IMR-90 (cell line): ENCODE measurements at regions of chr7 and their contacts with region 1.

Region 1: GRCh38 chr7:158829342-158830210 is at the start of gene ESYT2:
- DNase-seq: peak; percentile 96
- ATAC-seq: peak; percentile 87
- H3K4me3 ChIP-seq: peak within 1 kb of the TSS; percentile 86
- H3K27ac ChIP-seq: peak within 1 kb of the TSS; percentile 71
- H3K4me1 ChIP-seq: peaks cover 3% of the 10 kb centered on the region; the same call in 1 of the 2 replicates
- H3K27me3 ChIP-seq: no peaks in the 10 kb centered on the region
- CTCF ChIP-seq: peak; percentile 35
- POLR2A ChIP-seq: peak; percentile 94
- RAD21 ChIP-seq: peak; percentile 35
- total RNA-seq, gene ESYT2: 64.4 and 69.9 TPM in 2 replicates

Region 2: DNA sequence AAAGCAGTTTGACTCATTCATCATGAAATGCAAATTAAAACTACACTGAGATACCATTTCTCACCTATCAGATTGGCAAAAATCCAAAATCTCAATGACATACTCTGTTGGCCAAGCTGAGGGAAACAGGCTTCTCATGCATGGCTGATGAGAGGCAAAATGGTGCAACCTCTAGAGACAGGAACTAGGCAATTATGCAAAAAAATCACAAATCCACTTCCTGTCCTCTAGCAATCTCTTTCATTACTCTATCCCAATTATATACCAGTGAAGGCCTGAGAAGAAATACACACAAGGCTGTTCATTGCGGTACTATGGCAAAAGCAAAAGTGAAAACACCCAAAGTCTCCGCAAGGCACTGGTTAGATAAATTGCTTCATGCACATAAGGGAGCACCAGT is 216.1 kb before region 1 on chr7:
- CTCF ChIA-PET with region 1: no interaction called
- POLR2A ChIA-PET with region 1: no interaction called
- dilution Hi-C with region 1: no loop called
- in situ Hi-C with region 1: no loop called
- intact Hi-C with region 1: loop called (anchors 10 kb)
- DNase-seq: no peak
- ATAC-seq: no peak
- H3K4me3 ChIP-seq: no peak overlapping the region
- H3K27ac ChIP-seq: no peak overlapping the region
- H3K4me1 ChIP-seq: peaks cover 5% of the 10 kb centered on the region
- H3K27me3 ChIP-seq: no peaks in the 10 kb centered on the region
- CTCF ChIP-seq: no peak
- POLR2A ChIP-seq: no peak
- RAD21 ChIP-seq: no peak

Region 3: GRCh38 chr7:158704704-158705468 is 124.7 kb before region 1 on chr7 and contains the start of gene NCAPG2:
- CTCF ChIA-PET with region 1: no interaction called
- POLR2A ChIA-PET with region 1: no interaction called
- dilution Hi-C with region 1: no loop called
- in situ Hi-C with region 1: no loop called
- intact Hi-C with region 1: loop called (anchors 2 kb)
- DNase-seq: peak; percentile 98
- ATAC-seq: peak; percentile 99
- H3K4me3 ChIP-seq: peak within 1 kb of the TSS; percentile 87
- H3K27ac ChIP-seq: peak within 1 kb of the TSS; percentile 42
- H3K4me1 ChIP-seq: peaks cover 5% of the 10 kb centered on the region
- H3K27me3 ChIP-seq: no peaks in the 10 kb centered on the region
- CTCF ChIP-seq: no peak
- POLR2A ChIP-seq: no peak; the same call in 1 of the 2 replicates
- RAD21 ChIP-seq: peak; percentile 26; the same call in 1 of the 2 replicates
- total RNA-seq, gene NCAPG2: 25.8 and 31.7 TPM in 2 replicates

Region 4: DNA sequence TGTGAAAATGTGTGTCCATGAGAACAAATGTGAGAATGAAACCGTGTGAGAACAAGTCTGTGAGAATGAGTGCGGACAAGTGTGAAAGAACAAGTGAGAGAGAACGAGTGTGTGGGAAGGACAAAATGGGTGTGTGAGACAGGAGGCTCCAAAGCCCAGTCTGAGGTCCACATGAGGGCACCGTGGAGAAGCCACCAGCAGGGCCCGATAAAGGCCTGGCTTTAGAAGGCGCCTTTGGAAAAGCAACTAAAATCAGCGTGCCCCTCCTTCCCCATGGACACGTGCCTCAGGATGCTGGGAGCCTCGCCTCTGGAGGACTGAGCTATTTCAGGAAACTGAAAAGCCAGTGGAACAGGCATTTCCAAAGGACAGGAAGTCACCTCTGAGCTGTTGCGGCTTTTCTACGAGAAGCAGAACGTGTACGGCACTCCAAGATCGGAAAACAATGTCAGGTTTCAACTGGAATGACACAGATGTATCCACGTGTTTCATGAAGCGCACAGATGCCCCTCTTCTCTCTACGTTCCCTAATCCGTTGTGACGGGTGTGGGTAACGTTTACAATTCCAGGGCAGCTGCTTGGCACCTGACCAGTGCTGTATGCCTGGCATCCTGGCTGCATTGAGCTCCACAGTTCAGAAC is 46.7 kb before region 1 on chr7:
- CTCF ChIA-PET with region 1: interaction called, 3 read pairs
- POLR2A ChIA-PET with region 1: no interaction called
- dilution Hi-C with region 1: no loop called
- in situ Hi-C with region 1: no loop called
- intact Hi-C with region 1: loop called (anchors 2 kb)
- DNase-seq: peak; percentile 12
- ATAC-seq: no peak
- H3K4me3 ChIP-seq: no peak overlapping the region
- H3K27ac ChIP-seq: no peak overlapping the region
- H3K4me1 ChIP-seq: peaks cover 9% of the 10 kb centered on the region
- H3K27me3 ChIP-seq: no peaks in the 10 kb centered on the region
- CTCF ChIP-seq: peak; percentile 33; the same call in 1 of the 2 replicates
- POLR2A ChIP-seq: no peak
- RAD21 ChIP-seq: peak; percentile 57

Region 5: DNA sequence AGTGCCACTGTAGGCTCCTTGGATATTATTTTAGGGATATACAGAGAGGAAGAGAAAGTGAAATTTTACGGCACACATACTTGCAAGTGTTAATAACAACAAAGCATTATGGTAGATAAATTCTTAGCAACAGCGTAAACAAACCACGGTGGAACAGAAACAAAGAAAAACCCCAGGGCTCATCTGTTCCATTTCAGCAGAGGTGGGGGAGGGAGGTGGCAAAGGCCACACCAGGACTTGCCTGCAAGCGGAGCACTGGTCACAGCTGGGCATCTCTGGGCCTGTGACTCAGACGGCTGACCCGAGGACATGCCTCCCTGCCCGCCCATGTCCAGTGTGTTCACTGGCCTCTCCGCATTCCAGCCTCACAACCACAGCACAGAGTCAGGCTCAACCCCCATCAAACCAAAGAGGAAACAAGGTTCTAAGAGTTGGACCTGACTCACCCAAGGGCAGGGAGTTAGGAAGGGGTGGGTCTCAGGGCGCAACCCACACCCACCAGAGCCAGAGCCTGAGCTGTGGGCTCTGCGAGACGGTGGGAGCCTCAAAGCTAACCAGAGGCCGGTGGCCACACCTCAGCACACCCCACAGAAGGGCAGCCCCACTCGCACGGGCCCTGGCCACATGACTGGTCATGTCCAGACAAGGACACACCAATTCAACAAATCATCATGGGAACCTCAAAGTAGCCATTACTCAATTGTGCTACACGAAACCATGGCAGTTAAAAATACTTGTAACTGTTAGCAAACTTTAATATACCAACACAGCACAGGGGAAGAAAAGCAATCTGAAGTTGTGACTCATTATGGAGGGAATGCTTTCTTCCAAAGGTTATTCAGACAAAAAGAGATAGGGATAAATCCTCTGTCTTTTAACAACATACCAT is 11.0 kb before region 1 on chr7:
- CTCF ChIA-PET with region 1: interaction called, 3 read pairs
- POLR2A ChIA-PET with region 1: no interaction called
- dilution Hi-C with region 1: no loop called
- in situ Hi-C with region 1: no loop called
- intact Hi-C with region 1: loop called (anchors 1 kb)
- DNase-seq: peak; percentile 96
- ATAC-seq: peak; percentile 91
- H3K4me3 ChIP-seq: peak overlapping the region; percentile 22
- H3K27ac ChIP-seq: peak overlapping the region; percentile 92
- H3K4me1 ChIP-seq: peaks cover 23% of the 10 kb centered on the region
- H3K27me3 ChIP-seq: no peaks in the 10 kb centered on the region
- CTCF ChIP-seq: peak; percentile 13; the same call in 1 of the 2 replicates
- POLR2A ChIP-seq: peak; percentile 66; the same call in 1 of the 2 replicates
- RAD21 ChIP-seq: peak; percentile 38; the same call in 1 of the 2 replicates

Region 6: DNA sequence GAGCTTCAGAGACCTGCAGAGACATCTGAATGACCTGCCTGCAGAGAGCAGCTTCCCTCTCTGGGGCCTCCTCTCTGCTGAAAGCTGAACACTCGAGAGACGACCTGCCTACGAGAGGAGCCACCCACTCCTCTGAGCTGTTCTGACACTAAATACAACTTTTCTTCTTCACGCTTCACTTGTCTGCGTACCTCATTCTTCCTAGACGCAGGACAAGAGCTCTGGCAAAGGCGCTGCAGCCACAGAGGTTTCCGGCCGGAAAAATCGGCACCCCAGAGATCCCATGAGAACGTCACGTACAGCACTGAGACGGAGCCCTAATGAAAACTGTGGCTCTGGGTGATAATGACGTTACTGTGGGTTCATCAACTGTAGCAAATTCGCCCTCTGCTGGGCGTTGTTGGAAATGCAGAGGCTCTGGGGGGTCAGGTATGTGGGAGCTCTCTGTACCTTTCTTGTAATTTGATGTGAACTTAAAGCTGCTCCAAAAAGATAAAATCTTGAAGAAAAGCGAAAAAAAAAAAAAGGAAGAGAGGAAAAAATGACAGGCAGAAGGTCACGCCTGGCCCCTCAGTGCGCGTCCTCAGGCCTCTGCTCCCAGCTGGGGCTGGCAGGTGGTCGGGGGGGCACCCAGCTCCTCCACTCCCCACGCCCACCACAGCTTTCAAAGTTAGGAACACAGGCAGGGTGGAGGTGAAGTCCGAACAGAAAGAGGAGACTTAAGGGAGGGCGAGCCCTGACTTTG is 147.4 kb after region 1 on chr7:
- CTCF ChIA-PET with region 1: no interaction called
- POLR2A ChIA-PET with region 1: no interaction called
- dilution Hi-C with region 1: no loop called
- in situ Hi-C with region 1: no loop called
- intact Hi-C with region 1: loop called (anchors 2 kb)
- DNase-seq: peak; percentile 51
- ATAC-seq: peak; percentile 94
- H3K4me3 ChIP-seq: peak overlapping the region; percentile 4; the same call in 1 of the 2 replicates
- H3K27ac ChIP-seq: no peak overlapping the region
- H3K4me1 ChIP-seq: no peaks in the 10 kb centered on the region
- H3K27me3 ChIP-seq: no peaks in the 10 kb centered on the region
- CTCF ChIP-seq: peak; percentile 76
- POLR2A ChIP-seq: no peak
- RAD21 ChIP-seq: peak; percentile 69